Left colon (tissue), 2 donors: ENCODE measurements at regions of chr1 and their contacts with region 1.

Region 1: DNA sequence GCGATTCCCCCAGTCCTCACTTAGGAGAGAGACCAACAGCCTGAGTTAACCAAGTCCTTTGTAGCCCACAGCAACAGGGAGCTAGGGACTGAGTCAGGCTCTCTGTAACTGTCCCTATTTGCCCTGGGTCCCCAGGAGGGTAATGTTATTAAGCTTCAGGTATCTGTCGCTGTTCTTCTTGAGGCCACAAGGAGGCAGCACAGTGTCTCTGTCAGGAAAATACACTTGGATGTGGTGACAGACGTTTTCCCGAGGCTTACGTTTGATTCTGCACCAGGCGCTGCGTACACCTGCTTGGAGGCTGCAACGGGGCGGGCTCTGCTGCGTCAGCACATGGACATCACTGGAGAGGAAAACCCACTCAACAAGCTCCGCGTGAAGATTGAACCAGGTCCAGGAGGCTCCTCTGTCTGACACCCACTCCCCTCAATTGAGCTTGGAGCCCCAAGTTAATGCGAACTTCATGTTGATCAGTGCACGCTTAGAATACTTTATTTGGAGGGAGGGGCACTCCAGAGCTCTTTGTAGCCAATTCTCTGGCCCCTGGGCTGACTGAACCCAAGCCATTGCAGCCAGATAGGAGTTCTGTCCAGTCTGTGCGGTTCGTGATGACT is 10.7 kb upstream of the ELF3 start:
- DNase-seq: peak; percentile 34 to 47
- ATAC-seq: peak; percentile 83

Region 2: DNA sequence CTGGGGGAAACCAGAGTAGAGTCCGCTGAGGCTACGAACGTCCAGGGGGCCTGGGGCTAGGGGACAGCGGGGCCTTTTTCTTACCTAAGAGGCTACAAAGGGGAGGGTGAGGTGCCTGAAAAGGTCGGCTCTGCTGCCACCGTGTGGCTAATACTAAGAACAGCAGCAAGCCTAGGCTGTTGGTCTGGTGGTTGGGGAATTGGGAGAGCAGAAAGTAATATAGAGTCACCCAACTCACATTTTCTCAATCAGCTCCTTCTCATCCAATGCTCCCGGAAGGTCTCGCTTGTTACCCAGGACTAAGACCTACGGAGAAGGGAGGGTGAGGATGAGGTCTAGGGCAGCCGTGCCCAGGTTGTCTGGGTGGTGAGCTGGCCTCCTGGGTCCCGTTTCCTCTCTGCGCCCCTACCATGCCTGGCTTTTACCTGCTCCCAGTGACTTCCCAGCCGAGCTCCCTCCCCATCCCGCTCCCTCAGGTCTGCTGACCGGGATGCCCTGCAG is 135.5 kb after region 1 on chr1:
- intact Hi-C with region 1: loop called in 1 of 2 experiments (anchors 5 kb)
- DNase-seq: peak in 1 of 2 donors; percentile 46
- ATAC-seq: peak; percentile 79